ENCODE measurements at regions of chr16 and their contacts with region 1.

Region 1: DNA sequence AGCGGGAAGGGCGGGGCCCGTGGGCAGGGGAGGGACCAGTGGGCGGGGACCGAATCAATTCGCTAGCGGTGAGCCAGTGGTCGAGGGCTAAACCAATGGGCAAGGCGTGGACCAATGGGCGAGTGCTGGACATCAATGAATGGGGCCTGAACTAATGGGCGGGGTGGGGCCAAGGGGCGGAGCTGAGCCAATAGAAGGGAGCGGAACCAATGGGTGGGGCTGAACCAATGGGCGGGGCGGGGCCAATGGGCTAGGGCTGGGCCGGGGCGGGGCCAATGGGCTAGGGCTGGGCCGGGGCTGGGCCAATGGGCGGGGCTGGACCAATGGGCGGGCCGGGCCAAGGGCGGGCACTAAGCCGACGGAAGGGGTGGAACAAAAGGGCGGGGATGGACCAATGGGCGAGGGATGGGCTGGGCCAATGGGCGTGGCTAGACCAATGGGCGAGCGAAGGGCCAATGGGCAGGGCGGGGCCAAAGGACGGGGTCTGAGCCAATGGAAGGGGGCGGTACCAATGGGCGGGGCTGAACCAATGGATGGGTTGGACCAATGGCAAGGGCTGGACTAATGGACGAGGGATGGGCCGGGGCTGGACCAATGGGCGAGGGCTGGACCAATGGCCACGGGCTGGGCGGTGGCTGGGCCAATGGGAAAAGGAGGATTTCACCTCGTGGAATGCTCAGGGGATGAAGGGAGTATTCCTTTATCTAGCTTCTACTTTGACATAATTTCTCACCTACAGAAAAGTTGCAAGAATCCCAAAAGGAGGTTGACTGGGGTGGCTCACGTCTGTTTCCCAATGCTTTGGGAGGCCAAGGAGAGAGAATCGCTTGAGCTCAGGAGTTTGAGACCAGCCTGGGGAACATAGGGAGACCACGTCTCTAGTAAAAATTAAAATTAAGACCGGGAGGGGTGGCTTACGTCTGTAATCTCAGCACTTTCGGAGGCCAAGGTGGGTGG is 6.0 kb upstream of the FLYWCH1 start:
- DNase-seq: peak; percentile 99
- H3K4me3 ChIP-seq: peak overlapping the region; percentile 92
- H3K27ac ChIP-seq: peak overlapping the region; percentile 84
- H3K4me1 ChIP-seq: peaks cover 6% of the 10 kb centered on the region
- H3K27me3 ChIP-seq: no peaks in the 10 kb centered on the region
- CTCF ChIP-seq: no peak

Region 2: GRCh38 chr16:2883027-2883851 is 22.5 kb before region 1 on chr16 and contains the start of gene FLYWCH2:
- CTCF ChIA-PET with region 1: interaction called, 7 read pairs
- POLR2A ChIA-PET with region 1: no interaction called
- intact Hi-C with region 1: loop called (anchors 2 kb)
- DNase-seq: peak; percentile 98
- H3K4me3 ChIP-seq: peak within 1 kb of the TSS; percentile 77
- H3K27ac ChIP-seq: peak within 1 kb of the TSS; percentile 91
- H3K4me1 ChIP-seq: peaks cover 6% of the 10 kb centered on the region
- H3K27me3 ChIP-seq: no peaks in the 10 kb centered on the region
- CTCF ChIP-seq: no peak
- total RNA-seq, gene FLYWCH2: 23.9 and 28.5 TPM in 2 replicates

Region 3: DNA sequence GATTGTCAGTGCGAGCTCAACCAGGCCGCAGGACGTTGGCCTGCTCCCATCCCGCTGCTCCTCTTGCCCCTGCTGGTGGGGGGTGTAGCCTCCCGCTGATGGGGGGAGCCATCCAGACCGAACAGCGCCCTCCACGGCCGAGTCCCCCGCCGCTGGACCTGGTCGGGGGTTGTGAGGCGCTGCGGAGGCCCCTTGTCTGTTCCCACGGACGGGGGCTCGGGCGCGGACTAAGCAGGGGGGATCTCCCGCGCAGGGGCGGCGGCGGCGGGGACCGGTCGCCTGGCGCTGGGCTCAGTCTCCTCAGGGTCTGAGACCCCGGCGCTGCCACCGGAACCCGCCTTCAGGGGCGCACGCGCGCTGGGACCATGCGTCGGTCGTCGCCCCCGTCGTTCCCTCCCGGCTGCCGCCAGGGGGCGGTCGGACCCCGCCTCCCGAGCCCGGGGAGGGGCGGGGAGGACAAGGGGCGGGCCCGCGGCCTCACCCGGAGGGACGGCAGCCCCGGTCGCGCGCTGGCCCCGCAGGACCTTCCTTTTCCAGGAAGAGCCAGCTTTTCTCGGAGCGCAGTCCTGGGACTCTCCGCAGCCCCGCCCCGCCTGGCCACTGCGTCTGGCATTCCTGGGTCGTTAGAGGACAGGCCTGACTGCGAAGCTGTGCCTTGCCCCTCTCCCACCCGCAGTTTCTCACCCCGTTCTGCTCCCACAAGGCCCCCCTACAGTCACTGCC is 153.5 kb after region 1 on chr16:
- CTCF ChIA-PET with region 1: no interaction called
- POLR2A ChIA-PET with region 1: no interaction called
- intact Hi-C with region 1: no loop called
- DNase-seq: peak; percentile 87
- H3K4me3 ChIP-seq: peak overlapping the region; percentile 93
- H3K27ac ChIP-seq: peak overlapping the region; percentile 88
- H3K4me1 ChIP-seq: peaks cover 5% of the 10 kb centered on the region
- H3K27me3 ChIP-seq: no peaks in the 10 kb centered on the region
- CTCF ChIP-seq: peak; percentile 69

Measured in A673 (cell line).